Sciatic nerve (tissue), 2 donors: ENCODE measurements at regions of chr7 and their contacts with region 1.

Region 1: GRCh38 chr7:45897042-45897690 is 8.9 kb downstream of the IGFBP1 start:
- DNase-seq: no peak
- ATAC-seq: no peak

Region 2: GRCh38 chr7:44787041-44787440 is 1110.1 kb before region 1 on chr7:
- intact Hi-C with region 1: no loop called
- DNase-seq: no peak
- ATAC-seq: no peak

Region 3: GRCh38 chr7:45663167-45663921 is 233.8 kb before region 1 on chr7:
- intact Hi-C with region 1: no loop called
- DNase-seq: peak; percentile 31
- ATAC-seq: no peak

Region 4: GRCh38 chr7:45923290-45923689 is 26.1 kb after region 1 on chr7:
- intact Hi-C with region 1: no loop called
- DNase-seq: peak; percentile 85
- ATAC-seq: peak; percentile 77

Region 5: GRCh38 chr7:46344529-46344928 is 447.4 kb after region 1 on chr7:
- intact Hi-C with region 1: loop called (anchors 5 kb)
- DNase-seq: no peak
- ATAC-seq: no peak